AG04450 (cell line): ENCODE measurements at regions of chr14 and their contacts with region 1.

Region 1: GRCh38 chr14:95993768-95994592 is 45.2 kb upstream of the C14orf132 start:
- DNase-seq: peak; percentile 18
- H3K4me3 ChIP-seq: no peak overlapping the region
- H3K27ac ChIP-seq: no peak overlapping the region
- H3K27me3 ChIP-seq: peaks cover 16% of the 10 kb centered on the region
- CTCF ChIP-seq: peak; percentile 81

Region 2: DNA sequence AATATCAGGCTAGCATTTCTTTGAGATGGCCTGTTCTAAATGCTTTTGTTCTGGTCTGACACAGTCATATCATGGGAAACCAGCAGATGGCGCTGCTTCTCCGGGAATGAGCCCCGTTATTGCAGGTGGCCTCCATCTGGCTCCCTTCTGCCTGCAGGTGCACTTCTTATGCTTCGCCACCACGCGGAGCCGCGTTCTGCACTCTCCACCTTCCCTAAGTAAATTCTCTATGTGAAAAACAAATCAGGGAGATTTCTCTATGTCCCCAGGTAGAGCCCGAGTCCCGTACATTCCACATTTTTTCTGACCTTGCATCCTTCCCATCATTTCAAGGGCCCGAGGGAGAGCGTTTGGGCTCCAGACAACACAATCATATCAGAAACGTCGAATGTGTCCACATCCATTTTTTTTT is 433.0 kb before region 1 on chr14:
- CTCF ChIA-PET with region 1: interaction called, 64 read pairs
- POLR2A ChIA-PET with region 1: no interaction called
- DNase-seq: peak; percentile 68
- H3K4me3 ChIP-seq: no peak overlapping the region
- H3K27ac ChIP-seq: no peak overlapping the region
- H3K27me3 ChIP-seq: peaks cover 2% of the 10 kb centered on the region
- CTCF ChIP-seq: peak; percentile 97

Region 3: DNA sequence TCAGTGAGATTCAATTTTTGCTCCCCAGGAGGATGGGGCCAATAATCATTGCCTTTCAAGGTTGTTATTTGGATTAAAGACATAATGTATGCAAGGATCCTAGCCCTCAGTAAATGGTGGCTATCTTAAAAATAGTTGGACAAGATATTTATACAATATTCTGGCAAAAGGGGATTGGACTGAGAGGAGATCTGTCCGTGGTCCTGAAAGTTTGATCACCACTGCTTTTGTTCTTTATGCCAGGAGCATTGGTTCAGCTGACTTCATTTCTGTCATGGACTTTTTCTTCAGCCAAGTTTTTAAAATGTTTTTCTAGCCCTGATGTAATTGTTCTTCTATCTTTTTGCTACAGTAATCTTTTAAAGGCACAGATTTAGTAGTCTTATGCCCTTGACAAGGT is 209.8 kb before region 1 on chr14:
- CTCF ChIA-PET with region 1: no interaction called
- POLR2A ChIA-PET with region 1: no interaction called
- DNase-seq: no peak
- H3K4me3 ChIP-seq: no peak overlapping the region
- H3K27ac ChIP-seq: no peak overlapping the region
- H3K27me3 ChIP-seq: no peaks in the 10 kb centered on the region
- CTCF ChIP-seq: no peak

Region 4: DNA sequence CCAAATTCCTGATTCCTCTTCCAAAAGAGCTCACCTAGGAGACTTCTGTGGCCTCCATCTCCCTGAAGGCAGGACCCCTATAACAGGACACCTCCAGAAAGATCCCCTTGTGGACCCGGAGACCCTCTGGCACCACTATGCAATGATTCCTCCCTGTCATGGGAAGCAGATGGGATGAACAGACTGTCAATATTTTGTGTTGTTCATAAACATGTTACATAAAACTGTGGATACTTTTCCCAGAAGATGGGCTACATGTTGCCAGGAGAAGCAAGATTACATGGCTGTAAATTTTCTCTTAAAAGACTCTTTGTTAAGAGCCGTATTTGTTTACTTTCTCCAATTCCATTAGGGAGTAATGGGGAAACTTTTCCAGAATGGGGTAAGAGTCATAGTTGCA is 65.2 kb before region 1 on chr14:
- CTCF ChIA-PET with region 1: no interaction called
- POLR2A ChIA-PET with region 1: no interaction called
- DNase-seq: no peak
- H3K4me3 ChIP-seq: no peak overlapping the region
- H3K27ac ChIP-seq: no peak overlapping the region
- H3K27me3 ChIP-seq: no peaks in the 10 kb centered on the region
- CTCF ChIP-seq: no peak

Region 5: GRCh38 chr14:95981965-95982719 is 11.8 kb before region 1 on chr14:
- CTCF ChIA-PET with region 1: interaction called, 19 read pairs
- POLR2A ChIA-PET with region 1: no interaction called
- DNase-seq: no peak
- H3K4me3 ChIP-seq: no peak overlapping the region
- H3K27ac ChIP-seq: no peak overlapping the region
- H3K27me3 ChIP-seq: peaks cover 3% of the 10 kb centered on the region
- CTCF ChIP-seq: no peak

Region 6: DNA sequence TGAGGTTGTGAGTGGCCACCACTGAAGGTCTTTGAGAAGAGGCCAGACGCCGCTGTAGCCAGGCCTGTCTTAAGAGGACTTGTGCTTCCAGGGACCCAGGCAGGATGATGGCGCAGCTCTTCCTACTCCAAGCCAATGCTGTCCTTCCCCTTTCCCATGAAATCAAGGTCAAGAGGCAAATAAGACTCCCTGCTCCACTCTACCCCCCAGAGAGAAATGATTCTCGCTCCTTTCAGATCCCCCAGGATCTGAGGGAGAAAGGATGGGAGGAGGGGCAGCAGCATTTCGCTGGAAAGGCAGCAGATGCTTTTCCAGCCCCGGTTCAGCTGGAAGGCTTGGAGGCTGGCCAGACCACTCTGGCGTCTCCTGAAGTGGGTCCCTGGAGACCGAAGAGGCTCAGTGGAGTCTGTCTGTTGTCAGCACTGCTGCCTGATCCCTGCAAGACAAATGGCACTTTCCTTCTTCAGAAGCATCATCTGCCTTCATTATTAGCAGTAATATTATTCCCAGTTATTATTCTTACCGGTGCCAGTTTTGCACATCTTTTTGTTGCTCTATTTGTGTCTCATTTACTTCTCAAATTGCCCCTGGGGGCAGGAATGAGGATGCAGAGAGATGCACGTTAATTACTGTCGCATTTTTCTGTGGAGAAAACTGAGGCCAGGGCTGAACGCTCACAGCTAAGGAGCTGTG is 96.6 kb after region 1 on chr14:
- CTCF ChIA-PET with region 1: interaction called, 19 read pairs
- POLR2A ChIA-PET with region 1: no interaction called
- DNase-seq: peak; percentile 26
- H3K4me3 ChIP-seq: no peak overlapping the region
- H3K27ac ChIP-seq: peak overlapping the region; percentile 31
- H3K27me3 ChIP-seq: no peaks in the 10 kb centered on the region
- CTCF ChIP-seq: 0 out of 2 replicates have a peak, but pooled peaks have one; percentile 20